ENCODE measurements at regions of chr6 and their contacts with region 1.

Region 1: DNA sequence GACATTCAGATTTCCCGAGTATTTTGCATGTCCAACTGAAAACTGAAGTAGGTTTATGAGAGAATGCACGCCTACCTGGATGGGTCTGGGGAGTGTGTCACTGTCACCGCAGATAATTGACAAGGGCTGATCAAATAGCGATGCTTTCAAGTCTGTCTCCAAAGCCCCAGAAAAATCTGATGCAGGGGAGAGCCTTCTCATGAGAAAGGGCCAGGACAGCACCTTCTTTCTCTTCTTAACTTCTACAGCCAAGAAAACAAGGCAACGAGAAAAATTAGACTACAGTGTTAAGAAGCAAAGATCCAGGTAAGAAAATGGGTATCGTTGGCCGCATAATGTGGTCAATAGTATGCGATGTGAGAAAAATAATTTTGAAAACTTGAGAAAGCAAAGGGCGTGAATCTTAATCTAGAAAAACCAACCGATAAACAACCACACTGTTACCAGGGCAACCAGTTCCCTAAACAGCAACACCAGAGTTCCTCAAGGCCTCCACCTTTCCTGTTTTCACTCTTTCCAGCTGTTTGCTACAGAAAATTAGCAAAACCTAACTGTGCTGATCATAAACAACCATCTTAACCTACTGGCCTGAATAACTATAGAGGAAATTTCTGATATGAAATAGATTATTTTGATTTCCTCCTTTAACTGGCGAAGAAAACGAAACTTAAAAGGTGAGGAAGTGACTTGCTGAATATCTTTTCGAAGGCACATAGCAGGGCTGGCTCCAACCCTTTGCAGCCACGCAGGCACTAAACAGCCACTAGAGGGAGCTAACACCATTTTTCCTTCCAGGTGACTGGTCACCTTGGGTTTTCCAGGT is 2.6 kb downstream of the TAGAP start:
- DNase-seq: peak; percentile 91
- H3K4me3 ChIP-seq: peak overlapping the region; percentile 95
- H3K27ac ChIP-seq: peak overlapping the region; percentile 96
- H3K4me1 ChIP-seq: peaks cover 73% of the 10 kb centered on the region
- CTCF ChIP-seq: peak; percentile 100

Region 2: GRCh38 chr6:159008656-159009288 is 33.4 kb before region 1 on chr6:
- CTCF ChIA-PET with region 1: interaction called, 3 read pairs
- POLR2A ChIA-PET with region 1: interaction called, 10 read pairs
- intact Hi-C with region 1: loop called (anchors 1 kb)
- DNase-seq: peak; percentile 85
- H3K4me3 ChIP-seq: peak overlapping the region; percentile 14
- H3K27ac ChIP-seq: peak overlapping the region; percentile 19
- H3K4me1 ChIP-seq: peaks cover 48% of the 10 kb centered on the region
- CTCF ChIP-seq: peak; percentile 89

Region 3: GRCh38 chr6:159056003-159056402 is 13.8 kb after region 1 on chr6:
- CTCF ChIA-PET with region 1: interaction called, 3 read pairs
- POLR2A ChIA-PET with region 1: interaction called, 34 read pairs
- intact Hi-C with region 1: no loop called
- DNase-seq: peak; percentile 78
- H3K4me3 ChIP-seq: peak overlapping the region; percentile 47
- H3K27ac ChIP-seq: peak overlapping the region; percentile 81
- H3K4me1 ChIP-seq: peaks cover 44% of the 10 kb centered on the region
- CTCF ChIP-seq: no peak

Region 4: GRCh38 chr6:159086033-159086618 is 43.9 kb after region 1 on chr6:
- CTCF ChIA-PET with region 1: interaction called, 3 read pairs
- POLR2A ChIA-PET with region 1: interaction called, 11 read pairs
- intact Hi-C with region 1: no loop called
- DNase-seq: no peak
- H3K4me3 ChIP-seq: no peak overlapping the region
- H3K27ac ChIP-seq: no peak overlapping the region
- H3K4me1 ChIP-seq: peaks cover 9% of the 10 kb centered on the region
- CTCF ChIP-seq: no peak

Region 5: DNA sequence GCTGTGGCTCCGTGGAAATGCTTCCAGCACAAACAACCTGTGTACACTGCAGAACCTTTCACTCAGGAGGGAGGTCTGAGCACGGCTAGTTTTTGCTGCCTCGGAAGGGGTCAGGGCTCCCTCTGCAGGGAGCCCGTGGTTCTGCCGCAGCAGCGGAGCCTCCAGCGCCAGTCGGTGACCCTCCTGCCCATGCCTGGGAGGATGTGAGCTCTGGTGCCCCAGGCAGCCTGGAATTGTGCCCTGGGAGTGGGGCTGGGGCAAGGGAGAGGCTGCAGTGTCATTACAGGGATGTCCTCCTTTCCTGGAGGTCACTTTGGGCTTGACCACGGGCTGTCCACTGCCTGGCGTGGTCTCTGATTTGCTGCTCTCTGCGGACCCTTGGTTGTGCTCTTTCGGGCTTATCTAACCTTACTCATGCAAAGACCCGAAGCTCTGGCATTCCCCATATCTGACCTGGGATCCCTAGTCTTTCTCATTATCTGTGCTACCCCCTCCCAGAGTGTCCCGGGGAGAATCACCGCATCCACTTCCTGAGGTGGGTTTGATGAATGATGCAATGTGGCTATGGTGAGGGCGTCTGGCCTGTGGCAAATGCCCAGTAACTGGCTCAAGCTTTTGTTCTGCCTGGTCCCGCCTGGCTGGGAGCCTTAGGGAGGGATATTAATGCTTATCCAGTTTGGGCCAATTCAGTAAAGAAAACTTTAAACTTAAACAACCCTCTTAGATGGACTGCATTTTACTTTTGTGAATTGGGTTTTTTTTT is 62.1 kb after region 1 on chr6:
- CTCF ChIA-PET with region 1: interaction called, 22 read pairs
- POLR2A ChIA-PET with region 1: interaction called, 68 read pairs
- intact Hi-C with region 1: loop called (anchors 1 kb)
- DNase-seq: peak; percentile 91
- H3K4me3 ChIP-seq: peak overlapping the region; percentile 44
- H3K27ac ChIP-seq: peak overlapping the region; percentile 97
- H3K4me1 ChIP-seq: peaks cover 89% of the 10 kb centered on the region
- CTCF ChIP-seq: peak; percentile 98

Region 6: GRCh38 chr6:159125014-159125609 is 82.9 kb after region 1 on chr6:
- CTCF ChIA-PET with region 1: no interaction called
- POLR2A ChIA-PET with region 1: interaction called, 19 read pairs
- intact Hi-C with region 1: loop called (anchors 1 kb)
- DNase-seq: peak; percentile 52
- H3K4me3 ChIP-seq: no peak overlapping the region
- H3K27ac ChIP-seq: peak overlapping the region; percentile 89
- H3K4me1 ChIP-seq: peaks cover 72% of the 10 kb centered on the region
- CTCF ChIP-seq: peak; percentile 95

Region 7: DNA sequence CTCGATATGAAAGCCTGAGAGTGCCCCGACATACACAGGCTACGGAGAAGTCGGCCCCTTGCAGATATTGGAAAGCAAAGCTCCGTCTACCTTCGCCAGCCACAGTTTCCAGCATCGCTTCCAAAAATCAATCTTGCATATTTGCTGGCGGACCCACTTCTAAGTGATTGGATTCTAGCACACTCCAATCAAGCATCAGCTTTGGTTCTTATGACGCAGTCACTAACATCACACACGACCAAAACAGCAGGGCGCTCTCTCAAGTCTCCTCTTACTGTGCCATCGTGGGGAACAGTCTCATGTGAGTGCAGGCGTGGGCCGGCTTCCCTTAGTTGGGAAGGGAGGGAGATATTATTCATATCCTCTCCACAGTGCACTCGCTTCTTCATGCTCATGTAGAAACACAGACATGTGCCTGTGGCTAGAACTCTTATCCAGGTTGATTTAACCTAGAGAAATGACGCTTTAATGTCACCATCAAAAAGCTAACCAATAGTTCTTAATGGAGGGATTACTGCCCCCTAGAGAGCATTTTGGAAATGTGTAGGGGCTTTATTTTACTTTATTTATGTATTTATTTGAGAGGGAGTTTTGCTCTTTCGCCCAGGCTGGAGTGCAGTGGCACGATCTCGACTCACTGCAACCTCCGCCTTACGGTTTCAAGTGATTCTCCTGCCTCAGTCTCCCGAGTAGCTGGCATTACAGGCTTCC is 421.1 kb after region 1 on chr6:
- CTCF ChIA-PET with region 1: interaction called, 3 read pairs
- POLR2A ChIA-PET with region 1: interaction called, 3 read pairs
- intact Hi-C with region 1: loop called (anchors 10 kb)
- DNase-seq: peak; percentile 72
- H3K4me3 ChIP-seq: no peak overlapping the region
- H3K27ac ChIP-seq: peak overlapping the region; percentile 89
- H3K4me1 ChIP-seq: peaks cover 89% of the 10 kb centered on the region
- CTCF ChIP-seq: peak; percentile 80

Measured in OCI-LY7 (cell line).